CD8-positive, alpha-beta memory T cell (primary cell): ENCODE measurements at regions of chr17 and their contacts with region 1.

Region 1: DNA sequence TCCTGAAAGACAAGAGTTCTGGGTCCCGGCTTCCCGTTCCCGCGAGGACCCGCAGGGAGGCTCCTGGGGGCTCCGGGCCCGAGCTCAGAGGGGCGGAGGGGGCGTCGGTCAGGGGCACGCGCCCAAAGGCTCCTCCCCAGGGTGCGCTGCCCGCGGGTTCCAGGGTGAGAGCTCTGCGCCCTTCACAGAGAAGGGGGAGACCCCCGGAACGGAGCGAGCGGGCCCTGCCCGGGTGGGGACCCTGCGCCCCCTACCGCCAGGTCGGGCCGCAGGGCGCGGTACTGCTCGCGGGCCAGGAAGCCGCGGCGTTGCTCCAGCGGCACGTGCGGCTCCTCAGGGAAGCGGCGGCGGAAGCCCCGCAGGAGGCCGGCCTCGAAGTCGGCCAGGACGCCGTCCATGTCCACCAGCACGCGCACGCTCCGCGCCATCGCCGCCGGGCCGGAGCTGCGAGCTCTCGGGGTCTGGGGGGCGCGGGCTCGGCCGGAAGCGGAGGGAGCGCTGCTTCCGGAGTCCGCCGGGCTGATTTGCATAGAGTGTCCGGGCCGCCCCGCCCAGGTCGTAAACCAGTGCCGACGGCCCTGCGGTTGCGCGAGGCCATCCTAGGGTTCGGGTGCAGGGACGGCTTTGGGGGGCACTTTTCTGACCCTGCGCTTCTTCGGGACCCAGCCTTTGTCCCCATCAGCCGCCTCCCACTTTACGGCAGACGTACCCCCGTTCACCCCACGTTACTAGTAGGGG is at the start of gene NT5C:
- DNase-seq: peak; percentile 48 to 70 (median 64)
- H3K4me3 ChIP-seq: peak within 1 kb of the TSS; percentile 52
- H3K4me3 Mint-ChIP-seq: peak within 1 kb of the TSS; percentile 84 to 97 (median 89)
- H3K27ac ChIP-seq: peak within 1 kb of the TSS; percentile 67
- H3K27ac Mint-ChIP-seq: peak within 1 kb of the TSS; percentile 56 to 96 (median 88)
- H3K4me1 ChIP-seq: peaks cover 10% of the 10 kb centered on the region
- H3K4me1 Mint-ChIP-seq: peaks cover 7 to 16% (median 11%) of the 10 kb centered on the region in 3 donors
- H3K27me3 ChIP-seq: no peaks in the 10 kb centered on the region
- H3K27me3 Mint-ChIP-seq: no peaks in the 10 kb centered on the region
- total RNA-seq, gene NT5C: 75.7 to 84.8 TPM

Region 2: DNA sequence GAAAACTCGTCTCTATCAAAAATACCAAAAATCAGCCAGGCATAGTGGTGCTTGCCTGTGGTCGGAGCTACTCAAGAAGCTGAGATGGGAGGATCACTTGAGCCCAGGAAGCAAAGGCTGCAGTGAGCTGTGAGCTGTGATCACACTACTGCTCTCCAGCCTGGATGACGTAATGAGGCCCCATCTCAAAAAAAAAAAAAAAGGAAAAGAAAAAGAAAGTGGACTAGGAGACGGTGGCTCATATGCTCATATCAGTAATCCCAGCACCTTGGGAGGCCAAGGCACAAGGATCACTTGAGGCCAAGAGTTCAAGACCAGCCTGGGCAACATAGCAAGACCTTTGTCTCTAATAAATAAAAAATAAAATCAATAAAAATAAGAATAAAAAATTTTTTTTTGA is 60.1 kb after region 1 on chr17:
- CTCF ChIA-PET with region 1: no interaction called
- POLR2A ChIA-PET with region 1: interaction called, 11 read pairs
- DNase-seq: no peak
- H3K4me3 ChIP-seq: no peak overlapping the region
- H3K4me3 Mint-ChIP-seq: no peak overlapping the region
- H3K27ac ChIP-seq: no peak overlapping the region
- H3K27ac Mint-ChIP-seq: no peak overlapping the region
- H3K4me1 ChIP-seq: no peaks in the 10 kb centered on the region
- H3K4me1 Mint-ChIP-seq: peaks cover 0 to 6% (median 5%) of the 10 kb centered on the region in 3 donors
- H3K27me3 ChIP-seq: no peaks in the 10 kb centered on the region
- H3K27me3 Mint-ChIP-seq: no peaks in the 10 kb centered on the region

Region 3: DNA sequence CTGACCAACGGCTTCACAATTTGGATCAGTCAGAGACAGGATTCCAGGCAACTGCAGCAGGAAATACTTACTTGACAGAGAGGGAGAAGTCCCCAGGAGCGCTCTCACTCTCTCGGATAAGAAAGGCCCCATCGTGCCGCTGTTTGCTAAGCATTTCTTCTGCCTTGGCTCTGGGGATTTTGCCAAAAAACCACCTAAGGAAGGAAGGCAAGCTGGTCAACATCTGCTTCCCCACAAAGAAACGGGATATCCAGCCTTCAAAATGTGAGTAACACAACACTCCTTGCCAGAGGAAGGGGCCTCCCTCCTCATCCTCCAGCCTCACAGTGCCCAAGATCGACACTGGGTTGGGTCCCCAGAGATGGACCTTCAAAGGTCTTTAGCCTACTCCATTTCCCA is 194.4 kb after region 1 on chr17:
- CTCF ChIA-PET with region 1: no interaction called
- POLR2A ChIA-PET with region 1: no interaction called
- DNase-seq: no peak
- H3K4me3 ChIP-seq: no peak overlapping the region
- H3K4me3 Mint-ChIP-seq: no peak overlapping the region
- H3K27ac ChIP-seq: peak overlapping the region; percentile 11
- H3K27ac Mint-ChIP-seq: peak overlapping the region in 6 of 8 donors; percentile 5 to 70 (median 62)
- H3K4me1 ChIP-seq: peaks cover 14% of the 10 kb centered on the region
- H3K4me1 Mint-ChIP-seq: peaks cover 16 to 45% (median 34%) of the 10 kb centered on the region in 3 donors
- H3K27me3 ChIP-seq: no peaks in the 10 kb centered on the region
- H3K27me3 Mint-ChIP-seq: peaks cover 0 to 2% of the 10 kb centered on the region in 2 donors